Activated CD4-positive, alpha-beta T cell treated with anti-CD3 and anti-CD28 coated beads for 36 hours (primary cell): ENCODE measurements at regions of chr2 and their contacts with region 1.

Region 1: GRCh38 chr2:241309684-241310117 is 5.8 kb downstream of the HDLBP start:
- DNase-seq: peak; percentile 82
- ATAC-seq: peak; percentile 94
- H3K4me3 Mint-ChIP-seq: peak overlapping the region; percentile 43
- H3K27ac Mint-ChIP-seq: peak overlapping the region; percentile 88
- H3K4me1 Mint-ChIP-seq: peaks cover 71% of the 10 kb centered on the region
- H3K27me3 Mint-ChIP-seq: no peaks in the 10 kb centered on the region

Region 2: DNA sequence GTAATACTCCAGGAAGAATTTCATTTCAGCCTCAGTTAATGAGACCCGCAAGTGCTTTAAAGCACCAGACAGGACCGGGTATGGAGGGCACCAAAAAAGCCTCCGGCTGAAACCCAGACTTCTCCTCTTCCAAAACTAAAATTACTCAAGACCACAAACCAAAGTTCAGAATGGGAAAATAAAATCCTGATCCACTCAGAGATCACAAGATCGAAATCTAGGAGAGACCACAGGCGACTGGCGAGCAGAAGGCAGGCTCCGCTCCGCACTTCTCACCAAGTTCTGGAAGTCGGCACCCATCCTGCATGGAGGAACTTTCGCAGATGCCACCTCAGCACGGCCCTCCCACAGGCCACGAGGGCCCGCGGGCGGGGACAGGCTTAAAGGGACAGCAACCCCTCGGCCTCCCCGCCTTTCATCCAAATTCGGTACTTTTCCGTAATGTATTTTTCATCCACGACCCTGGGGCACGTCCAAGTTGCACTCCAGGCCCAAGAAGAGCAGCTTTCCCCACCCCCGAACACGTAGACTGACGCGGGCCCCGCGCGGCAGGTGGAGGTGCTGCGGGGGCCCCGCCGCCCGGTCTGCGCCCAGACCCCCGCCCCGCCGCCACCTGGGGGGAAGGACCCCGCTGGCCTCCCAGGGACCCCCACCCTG is 37.9 kb before region 1 on chr2:
- CTCF ChIA-PET with region 1: no interaction called
- POLR2A ChIA-PET with region 1: no interaction called
- intact Hi-C with region 1: loop called in 1 of 2 experiments (anchors 1 kb)
- DNase-seq: peak; percentile 72
- ATAC-seq: peak; percentile 59
- H3K4me3 Mint-ChIP-seq: peak overlapping the region; percentile 77
- H3K27ac Mint-ChIP-seq: peak overlapping the region; percentile 89
- H3K4me1 Mint-ChIP-seq: peaks cover 46% of the 10 kb centered on the region
- H3K27me3 Mint-ChIP-seq: no peaks in the 10 kb centered on the region